ENCODE measurements at regions of chr1 and their contacts with region 1.

Region 1: GRCh38 chr1:26417111-26417759 is 6.6 kb downstream of the LIN28A start:
- DNase-seq: peak; percentile 85
- H3K4me3 ChIP-seq: no peak overlapping the region
- H3K27ac ChIP-seq: no peak overlapping the region
- H3K4me1 ChIP-seq: no peaks in the 10 kb centered on the region
- H3K27me3 ChIP-seq: peaks cover 5% of the 10 kb centered on the region
- CTCF ChIP-seq: peak; percentile 81
- EP300 ChIP-seq: no peak
- RAD21 ChIP-seq: peak; percentile 69

Region 2: GRCh38 chr1:26279456-26280332 is 137.5 kb before region 1 on chr1 and contains the start of gene SH3BGRL3:
- CTCF ChIA-PET with region 1: interaction called, 25 read pairs
- POLR2A ChIA-PET with region 1: no interaction called
- DNase-seq: peak; percentile 96
- H3K4me3 ChIP-seq: peak within 1 kb of the TSS; percentile 85 to 95
- H3K27ac ChIP-seq: peak within 1 kb of the TSS; percentile 76 to 87
- H3K4me1 ChIP-seq: peaks cover 36 to 71% of the 10 kb centered on the region in 2 experiments; a peak in 3 of 4 replicates
- H3K27me3 ChIP-seq: no peaks in the 10 kb centered on the region
- CTCF ChIP-seq: peak; percentile 62
- EP300 ChIP-seq: no peak
- RAD21 ChIP-seq: peak; percentile 19; the same call in 1 of the 2 replicates
- polyA plus RNA-seq, gene SH3BGRL3: 131 and 202 TPM in 2 replicates

Region 3: DNA sequence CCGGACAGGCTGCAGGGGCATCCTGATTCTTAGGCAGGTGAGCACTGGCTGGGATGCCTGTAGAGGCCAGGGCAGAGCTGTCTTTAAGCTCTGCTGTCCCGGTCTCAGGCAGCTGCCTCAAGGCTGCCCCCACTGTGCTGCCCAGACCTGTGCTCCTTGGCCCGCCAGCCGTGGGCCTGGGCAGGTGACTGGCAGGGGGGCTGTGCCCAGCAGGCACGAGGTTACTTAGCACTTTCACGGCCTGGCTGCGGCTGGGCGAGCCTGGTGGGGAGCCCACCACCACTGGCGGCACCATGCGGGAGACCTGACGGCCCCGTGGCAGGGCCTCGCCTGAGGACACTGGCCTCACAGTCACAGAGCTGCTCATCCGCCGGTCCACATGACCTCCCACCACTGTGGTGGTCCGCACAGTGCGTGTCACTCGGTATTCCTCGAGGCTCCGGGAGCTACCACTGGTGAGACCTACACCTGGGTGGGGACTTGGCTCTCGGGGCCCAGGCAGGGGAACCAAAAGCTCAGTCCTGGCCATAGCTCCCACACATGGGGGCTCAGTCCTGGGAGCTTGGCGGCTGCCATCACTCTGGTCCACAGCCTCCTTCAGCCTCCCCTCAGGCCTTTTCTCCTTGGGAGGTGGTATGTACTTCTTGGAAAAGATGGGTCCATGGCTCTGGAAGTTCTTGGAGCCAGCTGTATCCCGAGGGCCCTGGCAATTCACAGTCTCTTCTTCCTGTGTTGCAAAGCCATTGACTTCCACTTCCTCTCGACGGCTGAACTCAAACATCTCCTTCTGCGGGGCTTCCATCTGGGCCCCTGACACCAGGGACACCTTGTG is 71.3 kb before region 1 on chr1:
- CTCF ChIA-PET with region 1: interaction called, 10 read pairs
- POLR2A ChIA-PET with region 1: no interaction called
- DNase-seq: no peak
- H3K4me3 ChIP-seq: no peak overlapping the region
- H3K27ac ChIP-seq: no peak overlapping the region
- H3K4me1 ChIP-seq: no peaks in the 10 kb centered on the region
- H3K27me3 ChIP-seq: peaks cover 13% of the 10 kb centered on the region; the same call in 1 of the 2 replicates
- CTCF ChIP-seq: no peak
- EP300 ChIP-seq: no peak
- RAD21 ChIP-seq: no peak

Region 4: DNA sequence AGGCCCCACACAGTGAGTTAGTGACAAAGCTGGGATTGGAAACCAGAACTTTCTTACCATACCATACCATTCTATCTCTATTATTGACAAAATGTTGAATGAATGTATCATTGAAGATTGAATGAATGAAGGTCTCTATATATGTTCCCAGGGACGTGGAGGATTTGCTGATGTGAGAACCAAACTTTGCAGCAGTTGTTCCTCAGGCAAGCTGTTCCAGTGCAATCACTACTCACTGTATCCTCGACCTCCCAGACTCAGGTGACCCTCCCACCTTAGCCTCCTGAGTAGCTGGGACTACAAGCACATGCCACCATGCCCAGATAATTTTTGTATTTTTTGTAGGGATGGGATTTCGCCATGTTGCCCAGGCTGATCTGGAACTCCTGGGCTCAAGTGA is 18.2 kb before region 1 on chr1:
- CTCF ChIA-PET with region 1: interaction called, 23 read pairs
- POLR2A ChIA-PET with region 1: no interaction called
- DNase-seq: no peak
- H3K4me3 ChIP-seq: no peak overlapping the region
- H3K27ac ChIP-seq: no peak overlapping the region
- H3K4me1 ChIP-seq: no peaks in the 10 kb centered on the region
- H3K27me3 ChIP-seq: no peaks in the 10 kb centered on the region
- CTCF ChIP-seq: no peak
- EP300 ChIP-seq: no peak
- RAD21 ChIP-seq: no peak

Region 5: DNA sequence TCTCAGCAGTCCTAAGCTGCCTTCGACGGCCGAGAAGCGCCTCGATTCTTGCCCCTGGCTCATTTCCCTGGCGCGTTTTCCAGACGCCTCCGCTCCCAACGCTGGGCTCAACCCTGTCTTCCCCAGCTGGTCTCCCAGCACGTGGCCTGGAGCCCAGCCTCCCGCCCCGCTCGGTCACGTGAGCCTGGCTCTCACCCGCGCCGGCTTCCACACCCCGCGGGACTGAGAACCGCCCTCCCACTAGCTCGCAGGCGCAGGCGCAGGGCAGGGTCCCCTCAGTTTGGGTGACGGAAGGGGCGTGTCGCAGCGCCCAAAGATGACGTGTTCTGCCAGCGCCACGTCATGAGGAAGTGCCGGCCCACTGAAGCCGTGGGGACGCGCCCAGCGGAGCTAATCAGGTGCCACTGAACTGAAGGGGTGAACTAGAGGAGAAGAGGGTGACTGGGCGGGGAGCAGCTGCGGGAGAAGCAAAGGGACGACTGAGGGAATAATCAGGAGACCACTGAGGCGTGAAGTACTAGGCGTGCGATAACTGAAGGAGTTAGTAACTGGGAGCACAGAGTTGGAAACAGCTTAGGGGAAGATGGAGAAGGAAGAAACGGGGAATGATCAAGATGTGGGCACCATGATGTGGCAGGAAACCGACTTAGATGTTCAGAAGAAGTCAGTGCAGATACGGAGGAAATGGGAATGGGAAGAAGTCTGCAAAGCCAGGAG is 14.9 kb after region 1 on chr1 and contains the start of gene DHDDS:
- CTCF ChIA-PET with region 1: interaction called, 51 read pairs
- POLR2A ChIA-PET with region 1: no interaction called
- DNase-seq: peak; percentile 98
- H3K4me3 ChIP-seq: peak within 1 kb of the TSS; percentile 73 to 83
- H3K27ac ChIP-seq: peak within 1 kb of the TSS; percentile 59 to 79; a peak in 3 of 4 replicates
- H3K4me1 ChIP-seq: peaks cover 7 to 8% of the 10 kb centered on the region in 2 experiments; a peak in 2 of 4 replicates
- H3K27me3 ChIP-seq: no peaks in the 10 kb centered on the region
- CTCF ChIP-seq: no peak
- EP300 ChIP-seq: no peak
- RAD21 ChIP-seq: no peak
- polyA plus RNA-seq, gene DHDDS: 25.0 and 36.6 TPM in 2 replicates

Region 6: DNA sequence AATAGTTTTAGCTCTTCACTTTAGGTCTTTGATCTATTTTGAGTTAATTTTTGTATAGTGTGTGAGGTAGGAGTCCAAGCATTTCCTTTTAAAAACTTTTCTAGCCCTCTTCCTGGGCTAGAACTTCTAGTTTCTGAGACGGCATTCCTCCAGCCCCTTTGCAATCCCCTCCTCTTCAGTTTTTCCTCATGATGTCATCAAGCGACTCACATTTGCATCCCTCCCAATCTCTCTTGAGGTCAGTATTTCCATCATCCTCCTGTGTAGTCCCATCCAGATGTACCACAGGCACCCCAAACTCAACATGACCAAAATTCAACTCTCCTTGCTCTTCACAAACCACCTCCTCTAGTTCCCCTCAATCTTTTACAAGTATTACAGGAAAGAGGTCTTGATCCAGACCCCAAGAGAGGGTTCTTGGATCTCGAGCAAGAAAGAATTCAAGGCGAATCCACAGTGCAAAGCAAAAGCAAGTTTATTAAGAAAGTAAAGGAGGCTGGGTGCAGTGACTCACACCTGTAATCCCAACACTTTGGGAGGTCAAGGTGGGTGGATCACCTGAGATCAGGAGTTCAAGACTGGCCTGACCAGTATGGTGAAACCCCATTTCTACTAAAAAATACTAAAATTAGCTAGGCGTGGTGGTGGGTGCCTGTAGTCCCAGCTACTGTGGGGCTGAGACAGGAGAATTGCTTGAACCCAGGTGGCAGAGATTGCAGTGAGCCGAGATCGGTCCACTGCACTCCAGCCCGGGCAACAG is 65.9 kb after region 1 on chr1:
- CTCF ChIA-PET with region 1: no interaction called
- POLR2A ChIA-PET with region 1: no interaction called
- DNase-seq: no peak
- H3K4me3 ChIP-seq: no peak overlapping the region
- H3K27ac ChIP-seq: peak overlapping the region in 1 of 2 experiments; percentile 50; a peak in 2 of 4 replicates
- H3K4me1 ChIP-seq: peaks cover 0 to 14% of the 10 kb centered on the region in 2 experiments; a peak in 1 of 4 replicates
- H3K27me3 ChIP-seq: no peaks in the 10 kb centered on the region
- CTCF ChIP-seq: no peak
- EP300 ChIP-seq: no peak
- RAD21 ChIP-seq: no peak